Left cardiac atrium (tissue), 4 donors: ENCODE measurements at regions of chr3 and their contacts with region 1.

Region 1: GRCh38 chr3:155744626-155745324 is at the start of gene PLCH1:
- DNase-seq: peak; percentile 62
- ATAC-seq: peak; percentile 86 to 90
- total RNA-seq, gene PLCH1: 0.39 to 1.3 TPM

Region 2: GRCh38 chr3:155594526-155595187 is 150.1 kb before region 1 on chr3:
- intact Hi-C with region 1: no loop called
- DNase-seq: no peak
- ATAC-seq: no peak

Region 3: GRCh38 chr3:155859859-155860258 is 115.1 kb after region 1 on chr3:
- intact Hi-C with region 1: loop called in 1 of 2 experiments (anchors 5 kb)
- DNase-seq: no peak
- ATAC-seq: no peak